OCI-LY7 (cell line): ENCODE measurements at regions of chr2 and their contacts with region 1.

Region 1: DNA sequence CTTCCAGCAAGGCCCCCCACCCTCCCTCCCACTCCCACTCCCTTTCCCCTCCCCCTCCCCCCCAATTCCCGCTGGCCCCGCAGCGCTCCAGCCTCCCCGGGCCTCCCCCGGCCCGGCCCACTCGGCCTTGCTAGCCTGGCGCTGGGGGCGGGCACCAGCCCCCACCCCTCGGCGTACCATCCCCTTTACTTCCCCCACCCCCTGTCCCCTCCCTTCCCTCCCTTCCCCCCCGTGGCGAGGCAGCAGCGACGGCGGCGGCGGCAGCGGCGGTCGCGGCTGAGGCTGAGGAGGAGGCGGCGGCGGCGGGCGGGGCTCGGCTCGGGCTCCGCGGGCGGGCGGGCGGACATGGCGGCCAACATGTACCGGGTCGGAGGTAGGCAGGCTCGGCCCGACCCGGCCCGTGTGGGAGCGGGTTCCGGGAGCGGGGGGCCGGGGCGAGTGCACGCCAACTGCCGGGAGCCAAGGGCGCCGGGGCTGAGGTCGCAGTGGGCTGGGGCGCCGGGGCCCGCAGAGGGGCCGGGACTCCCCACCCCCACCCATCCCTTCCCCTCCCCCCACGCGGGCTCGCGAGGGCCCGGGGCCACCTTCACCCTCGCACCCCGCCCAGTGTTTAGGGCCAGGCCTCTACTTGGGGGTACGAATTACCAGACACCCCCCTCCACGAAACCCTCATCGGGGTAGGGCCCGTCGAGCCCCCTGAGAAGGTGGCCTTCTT is at the start of gene MTA3:
- DNase-seq: peak; percentile 75
- H3K4me3 ChIP-seq: peak within 1 kb of the TSS; percentile 96
- H3K27ac ChIP-seq: peak within 1 kb of the TSS; percentile 99
- H3K4me1 ChIP-seq: peaks cover 69% of the 10 kb centered on the region
- CTCF ChIP-seq: no peak
- total RNA-seq, gene MTA3: 66.7 and 72.7 TPM in 2 replicates

Region 2: GRCh38 chr2:42494355-42495233 is 74.0 kb before region 1 on chr2:
- CTCF ChIA-PET with region 1: no interaction called
- POLR2A ChIA-PET with region 1: interaction called, 3 read pairs
- intact Hi-C with region 1: loop called (anchors 2 kb)
- DNase-seq: peak; percentile 88
- H3K4me3 ChIP-seq: peak overlapping the region; percentile 72
- H3K27ac ChIP-seq: peak overlapping the region; percentile 26
- H3K4me1 ChIP-seq: peaks cover 10% of the 10 kb centered on the region
- CTCF ChIP-seq: peak; percentile 98

Region 3: GRCh38 chr2:42513257-42513918 is 55.2 kb before region 1 on chr2:
- CTCF ChIA-PET with region 1: no interaction called
- POLR2A ChIA-PET with region 1: interaction called, 3 read pairs
- intact Hi-C with region 1: loop called (anchors 5 kb)
- DNase-seq: peak; percentile 50
- H3K4me3 ChIP-seq: no peak overlapping the region
- H3K27ac ChIP-seq: no peak overlapping the region
- H3K4me1 ChIP-seq: peaks cover 14% of the 10 kb centered on the region
- CTCF ChIP-seq: peak; percentile 84

Region 4: GRCh38 chr2:42547014-42547413 is 21.5 kb before region 1 on chr2:
- CTCF ChIA-PET with region 1: interaction called, 3 read pairs
- POLR2A ChIA-PET with region 1: interaction called, 58 read pairs
- intact Hi-C with region 1: loop called (anchors 1 kb)
- DNase-seq: peak; percentile 92
- H3K4me3 ChIP-seq: peak overlapping the region; percentile 65
- H3K27ac ChIP-seq: peak overlapping the region; percentile 98
- H3K4me1 ChIP-seq: peaks cover 61% of the 10 kb centered on the region
- CTCF ChIP-seq: no peak

Region 5: DNA sequence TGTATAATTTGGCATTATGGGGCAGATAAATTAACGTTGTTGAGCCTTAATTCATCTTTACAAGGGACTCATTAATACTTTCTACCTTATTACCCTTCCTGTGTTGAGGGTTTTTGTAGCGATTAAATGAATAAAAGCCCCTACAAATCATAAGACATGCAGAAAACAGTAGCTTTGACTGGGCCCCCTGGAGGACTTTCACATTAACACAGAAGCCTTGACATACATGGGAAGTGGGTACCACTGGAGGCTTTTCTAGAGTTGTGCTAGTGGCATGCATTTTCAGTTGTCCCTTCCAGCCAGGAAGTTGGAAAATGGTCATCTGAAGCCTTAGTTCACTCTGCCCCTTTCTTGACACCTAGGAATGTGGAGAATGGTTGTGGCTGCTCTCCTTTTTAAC is 30.1 kb after region 1 on chr2:
- CTCF ChIA-PET with region 1: no interaction called
- POLR2A ChIA-PET with region 1: interaction called, 6 read pairs
- intact Hi-C with region 1: loop called (anchors 2 kb)
- DNase-seq: peak; percentile 68
- H3K4me3 ChIP-seq: peak overlapping the region; percentile 48
- H3K27ac ChIP-seq: peak overlapping the region; percentile 82
- H3K4me1 ChIP-seq: peaks cover 43% of the 10 kb centered on the region
- CTCF ChIP-seq: peak; percentile 73

Region 6: GRCh38 chr2:42663106-42663780 is 94.7 kb after region 1 on chr2:
- CTCF ChIA-PET with region 1: no interaction called
- POLR2A ChIA-PET with region 1: interaction called, 3 read pairs
- intact Hi-C with region 1: loop called (anchors 2 kb)
- DNase-seq: peak; percentile 83
- H3K4me3 ChIP-seq: no peak overlapping the region
- H3K27ac ChIP-seq: no peak overlapping the region
- H3K4me1 ChIP-seq: peaks cover 9% of the 10 kb centered on the region
- CTCF ChIP-seq: peak; percentile 99

Region 7: GRCh38 chr2:42961385-42961811 is 392.8 kb after region 1 on chr2:
- CTCF ChIA-PET with region 1: no interaction called
- POLR2A ChIA-PET with region 1: no interaction called
- intact Hi-C with region 1: no loop called
- DNase-seq: peak; percentile 64
- H3K4me3 ChIP-seq: no peak overlapping the region
- H3K27ac ChIP-seq: no peak overlapping the region
- H3K4me1 ChIP-seq: peaks cover 37% of the 10 kb centered on the region
- CTCF ChIP-seq: no peak

Region 8: DNA sequence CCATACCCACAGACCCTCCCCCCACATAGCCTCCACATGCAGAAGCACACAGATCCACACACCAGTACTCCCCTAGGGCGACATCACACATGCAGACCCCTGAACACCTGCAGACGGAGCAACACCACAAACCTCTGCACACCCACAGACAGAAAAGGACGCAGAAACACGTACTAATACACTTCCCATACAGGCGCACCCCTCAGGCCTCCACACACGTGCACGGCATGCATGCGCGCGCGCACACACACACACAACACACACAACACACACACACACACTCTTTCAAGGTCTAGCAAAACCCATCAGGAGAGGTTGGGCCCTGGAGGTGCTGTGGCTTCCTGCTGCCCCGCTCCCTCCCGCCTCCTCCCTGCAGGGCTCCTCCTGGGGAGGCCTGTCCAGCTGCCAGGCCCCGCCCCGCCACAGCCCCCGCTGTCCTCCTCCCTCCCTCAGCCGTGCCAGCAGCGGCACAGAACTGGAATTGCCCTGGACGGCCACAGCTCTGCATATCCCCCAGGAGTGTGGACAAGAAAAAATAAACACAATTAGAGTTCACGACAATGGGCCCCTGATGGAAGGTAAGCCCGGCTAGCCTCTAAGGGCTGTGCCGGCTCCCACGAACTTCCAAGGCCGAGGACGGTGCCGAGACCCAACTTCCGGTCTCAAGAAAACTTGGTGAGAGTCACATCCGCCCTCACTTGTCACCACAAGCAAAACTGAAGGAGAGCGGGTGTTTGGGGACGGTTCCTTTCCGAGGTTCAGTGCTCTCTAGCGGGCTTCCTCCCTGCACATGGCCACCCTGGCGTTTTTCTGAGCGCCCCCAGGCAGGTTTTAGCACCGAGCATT is 651.0 kb after region 1 on chr2:
- CTCF ChIA-PET with region 1: no interaction called
- POLR2A ChIA-PET with region 1: interaction called, 3 read pairs
- intact Hi-C with region 1: loop called (anchors 10 kb)
- DNase-seq: peak; percentile 94
- H3K4me3 ChIP-seq: peak overlapping the region; percentile 89
- H3K27ac ChIP-seq: peak overlapping the region; percentile 91
- H3K4me1 ChIP-seq: peaks cover 67% of the 10 kb centered on the region
- CTCF ChIP-seq: no peak; the same call in 1 of the 2 replicates